AG04450 (cell line): ENCODE measurements at regions of chr7 and their contacts with region 1.

Region 1: GRCh38 chr7:21253740-21254687 is 173.9 kb upstream of the SP4 start:
- DNase-seq: no peak
- H3K4me3 ChIP-seq: no peak overlapping the region
- H3K27ac ChIP-seq: no peak overlapping the region
- H3K27me3 ChIP-seq: no peaks in the 10 kb centered on the region
- CTCF ChIP-seq: peak; percentile 62

Region 2: DNA sequence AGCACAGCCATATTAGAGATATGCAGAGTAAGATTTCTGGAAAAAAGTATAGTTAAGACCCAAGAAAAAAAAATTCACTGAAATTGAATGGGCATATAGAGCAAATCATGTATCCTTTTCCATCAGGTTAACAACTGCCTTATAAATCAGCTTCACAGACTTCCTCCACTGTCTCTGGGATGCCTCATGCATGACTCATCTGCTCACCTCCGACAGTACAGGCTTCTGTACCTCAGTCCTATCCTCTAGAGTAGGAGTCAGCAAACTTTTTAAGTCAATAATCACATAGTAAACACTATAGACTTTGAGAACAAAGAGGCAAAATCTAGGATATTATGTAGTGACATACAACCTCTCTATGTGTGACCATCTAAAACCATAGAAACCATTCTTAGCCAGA is 255.7 kb before region 1 on chr7:
- CTCF ChIA-PET with region 1: no interaction called
- POLR2A ChIA-PET with region 1: no interaction called
- DNase-seq: no peak
- H3K4me3 ChIP-seq: no peak overlapping the region
- H3K27ac ChIP-seq: no peak overlapping the region
- H3K27me3 ChIP-seq: no peaks in the 10 kb centered on the region
- CTCF ChIP-seq: no peak

Region 3: GRCh38 chr7:21507626-21508343 is 253.8 kb after region 1 on chr7:
- CTCF ChIA-PET with region 1: interaction called, 57 read pairs
- POLR2A ChIA-PET with region 1: no interaction called
- DNase-seq: peak; percentile 7
- H3K4me3 ChIP-seq: no peak overlapping the region
- H3K27ac ChIP-seq: no peak overlapping the region
- H3K27me3 ChIP-seq: no peaks in the 10 kb centered on the region
- CTCF ChIP-seq: peak; percentile 83

Region 4: DNA sequence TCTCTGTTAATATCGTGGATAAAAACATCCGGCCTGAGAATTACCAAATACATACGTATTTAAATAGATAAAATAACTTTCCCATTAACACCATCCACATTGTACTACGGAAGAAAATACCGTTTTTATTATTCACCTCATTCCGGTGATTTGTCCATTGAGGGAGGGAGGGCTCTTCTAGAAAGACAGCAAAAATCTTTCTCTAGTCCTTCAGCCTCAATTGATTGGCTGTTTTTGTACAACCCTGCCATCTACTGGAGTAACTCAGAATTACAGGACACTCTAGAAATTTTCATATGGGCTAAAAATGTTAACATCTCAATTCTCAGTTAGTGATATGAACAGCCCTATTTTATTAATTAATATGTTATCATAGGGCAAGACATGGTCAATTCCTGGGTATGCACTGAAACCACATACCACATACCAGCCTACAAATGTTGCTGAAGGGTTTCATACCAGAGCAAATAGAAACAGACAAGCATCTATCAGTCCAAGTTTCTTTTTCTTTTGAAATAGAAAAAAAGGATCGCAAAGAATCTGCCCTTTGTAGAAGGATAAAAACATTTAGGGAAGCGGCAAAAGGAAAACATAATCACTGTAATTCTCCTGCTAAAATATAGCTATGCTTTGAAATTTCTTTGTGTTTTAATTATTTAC is 747.5 kb after region 1 on chr7:
- CTCF ChIA-PET with region 1: interaction called, 14 read pairs
- POLR2A ChIA-PET with region 1: no interaction called
- DNase-seq: peak; percentile 16
- H3K4me3 ChIP-seq: no peak overlapping the region
- H3K27ac ChIP-seq: no peak overlapping the region
- H3K27me3 ChIP-seq: peaks cover 2% of the 10 kb centered on the region
- CTCF ChIP-seq: peak; percentile 83

Region 5: GRCh38 chr7:22082886-22083703 is 829.1 kb after region 1 on chr7:
- CTCF ChIA-PET with region 1: interaction called, 13 read pairs
- POLR2A ChIA-PET with region 1: no interaction called
- DNase-seq: peak; percentile 44
- H3K4me3 ChIP-seq: peak overlapping the region; percentile 86
- H3K27ac ChIP-seq: peak overlapping the region; percentile 75
- H3K27me3 ChIP-seq: peaks cover 8% of the 10 kb centered on the region
- CTCF ChIP-seq: peak; percentile 92